GM10248 (cell line): ENCODE measurements at regions of chr11 and their contacts with region 1.

Region 1: DNA sequence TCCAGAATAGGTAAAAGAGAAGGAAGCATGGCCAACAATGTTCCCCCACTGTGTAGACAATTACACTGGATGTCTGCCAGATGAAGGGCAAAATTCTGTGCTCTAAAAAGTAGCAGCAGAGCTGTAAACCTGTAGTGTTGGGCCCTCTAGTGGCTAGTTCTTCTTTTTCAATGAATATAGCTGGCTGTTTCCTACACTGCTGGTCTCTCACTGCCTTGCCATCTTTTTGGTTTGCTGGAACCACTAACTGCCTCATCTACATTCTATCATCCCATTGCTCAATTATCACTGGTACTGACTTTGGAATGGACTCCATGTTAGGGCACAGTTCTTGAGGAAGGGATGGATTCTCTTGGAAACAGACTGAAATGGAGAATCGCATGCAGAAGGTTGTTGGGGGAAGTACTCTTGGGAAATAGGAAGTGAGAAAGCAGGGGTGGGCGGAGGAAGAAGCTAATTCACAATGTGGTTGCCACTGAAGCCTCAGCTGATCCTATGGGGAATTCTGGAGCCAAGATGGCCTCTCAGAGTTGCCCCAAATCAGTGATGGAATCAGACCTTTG is 17.9 kb downstream of the KCNE3 start:
- DNase-seq: peak; percentile 65
- CTCF ChIP-seq: peak; percentile 59

Region 2: DNA sequence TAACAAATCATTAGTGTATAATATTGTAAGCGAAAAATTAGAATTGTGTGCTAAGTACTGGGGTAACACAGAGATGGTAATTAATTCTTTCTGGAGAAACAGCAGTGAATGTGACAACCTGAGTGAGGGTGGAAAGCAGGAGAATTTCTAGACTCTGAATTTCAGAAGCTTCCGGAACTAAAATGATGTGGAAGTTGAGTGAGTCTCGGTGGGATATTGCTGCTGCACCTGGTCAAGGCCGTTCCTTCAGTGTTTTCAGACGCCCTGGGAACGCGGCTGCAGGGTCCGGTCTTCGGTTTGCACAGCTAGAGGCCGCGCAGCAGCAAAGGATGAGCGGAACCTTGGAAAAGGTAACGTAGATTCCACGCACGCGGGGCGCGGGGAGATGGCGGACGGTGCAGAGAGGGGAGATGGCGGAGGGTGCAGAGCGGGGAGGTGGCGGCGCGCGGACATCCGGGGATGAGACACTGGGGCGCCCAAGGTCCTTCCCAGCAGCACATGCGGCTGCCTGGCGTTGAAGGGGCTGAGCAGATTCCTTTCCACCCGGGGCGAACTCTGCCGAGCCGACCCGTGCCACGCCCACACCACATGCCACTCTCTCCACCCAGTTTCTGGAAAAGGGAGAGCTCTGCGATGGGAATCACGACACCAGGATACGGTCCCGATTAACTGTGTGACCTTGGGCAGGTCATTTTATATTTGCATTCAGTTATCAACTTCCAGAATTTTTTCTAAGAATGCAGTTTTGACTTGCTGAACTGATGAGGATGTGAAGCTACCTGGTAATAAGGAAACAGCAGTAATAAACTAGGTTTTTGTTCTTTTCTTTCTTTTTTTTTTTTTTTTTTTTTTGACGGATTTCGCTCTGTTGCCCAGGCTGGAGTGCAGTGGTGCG is 661.6 kb before region 1 on chr11 and contains the start of gene MRPL48:
- CTCF ChIA-PET with region 1: no interaction called
- POLR2A ChIA-PET with region 1: no interaction called
- DNase-seq: peak; percentile 95
- CTCF ChIP-seq: no peak

Region 3: DNA sequence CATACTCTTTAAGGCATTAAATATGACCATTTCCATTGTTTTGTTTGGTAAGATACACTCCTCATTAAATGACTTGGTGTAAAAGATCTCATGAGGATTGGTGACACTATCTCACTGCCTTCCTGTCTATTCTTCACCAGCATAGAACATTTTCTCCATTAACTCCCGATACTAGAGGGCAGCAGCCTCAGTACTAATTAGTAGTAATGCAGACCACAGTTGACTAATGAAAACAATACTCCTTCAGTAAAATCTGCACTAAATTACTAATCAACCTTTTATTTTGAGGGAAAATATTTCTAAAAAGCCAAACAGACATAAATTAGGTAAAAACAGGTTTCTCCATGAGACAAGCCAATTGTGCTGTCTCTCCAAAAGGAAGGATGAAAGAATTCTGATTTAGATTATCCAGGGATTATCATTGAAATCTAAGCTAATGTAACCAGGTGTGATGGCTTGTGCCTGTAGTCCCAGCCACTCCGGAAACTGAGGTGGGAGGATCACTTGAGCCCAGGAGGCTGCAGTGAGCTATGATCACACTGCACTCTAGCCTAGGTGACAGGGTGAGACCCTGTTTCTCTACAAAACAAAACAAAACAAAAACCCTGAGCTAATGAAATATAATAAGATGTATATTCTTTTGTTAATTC is 60.6 kb before region 1 on chr11:
- CTCF ChIA-PET with region 1: interaction called, 136 read pairs
- POLR2A ChIA-PET with region 1: no interaction called
- DNase-seq: peak; percentile 50
- CTCF ChIP-seq: peak; percentile 80

Region 4: DNA sequence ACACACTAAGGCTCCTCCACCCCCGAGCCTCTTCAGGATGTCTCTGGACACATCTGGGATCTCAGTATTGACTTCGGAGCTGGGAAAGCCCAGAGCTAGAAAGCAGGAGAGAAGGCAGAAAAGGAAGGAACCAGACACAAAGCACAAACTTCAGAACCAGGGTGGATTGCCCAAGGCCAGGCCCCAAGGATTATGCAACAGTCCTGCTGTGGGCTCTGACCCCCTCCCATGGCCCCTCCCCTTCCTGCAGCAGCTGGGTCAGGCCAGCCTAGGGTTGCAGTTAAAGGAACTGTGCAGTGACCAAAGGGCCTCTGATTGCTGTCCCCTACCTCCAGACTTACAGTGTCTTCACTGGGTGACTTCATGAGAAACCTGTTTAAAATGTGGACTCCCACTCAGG is 12.6 kb after region 1 on chr11:
- CTCF ChIA-PET with region 1: interaction called, 72 read pairs
- POLR2A ChIA-PET with region 1: no interaction called
- DNase-seq: no peak
- CTCF ChIP-seq: no peak

Region 5: DNA sequence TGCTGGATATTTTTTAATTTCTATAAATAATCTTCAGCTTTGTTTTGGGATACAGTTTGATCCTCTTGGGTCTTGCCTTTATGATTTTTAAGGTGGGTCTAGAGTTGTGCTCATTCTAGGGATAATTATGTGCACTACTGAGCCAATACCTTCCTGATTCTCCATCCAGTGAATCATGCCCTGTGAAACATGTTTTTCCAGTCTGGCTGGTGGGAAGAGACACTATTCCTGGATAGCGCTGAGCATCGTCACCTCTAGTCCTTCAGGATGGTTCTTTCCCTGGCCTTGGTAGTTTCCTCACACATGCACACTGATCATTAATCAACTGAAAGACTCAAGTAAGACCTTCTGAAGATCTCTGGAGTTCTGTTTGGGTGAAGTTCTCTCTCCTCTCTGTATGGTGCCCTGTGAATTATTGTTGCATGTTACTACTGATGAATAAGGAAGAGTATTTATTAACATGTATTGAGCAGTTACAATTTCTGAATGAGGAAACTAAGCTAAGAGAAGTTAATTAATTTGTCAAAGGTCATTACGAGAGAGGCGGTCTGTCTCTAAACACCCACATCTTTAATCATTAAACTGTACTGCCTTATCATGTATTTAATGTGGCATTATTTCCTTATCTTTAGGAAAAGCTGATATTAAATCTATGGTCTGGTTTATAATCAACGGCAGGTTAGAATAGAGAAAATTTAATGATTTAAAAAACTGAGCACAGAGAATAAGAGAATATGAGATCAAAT is 83.2 kb after region 1 on chr11:
- CTCF ChIA-PET with region 1: no interaction called
- POLR2A ChIA-PET with region 1: no interaction called
- DNase-seq: no peak
- CTCF ChIP-seq: no peak

Region 6: GRCh38 chr11:74570266-74571061 is 121.0 kb after region 1 on chr11:
- CTCF ChIA-PET with region 1: interaction called, 192 read pairs
- POLR2A ChIA-PET with region 1: no interaction called
- DNase-seq: peak; percentile 57
- CTCF ChIP-seq: peak; percentile 67

Region 7: GRCh38 chr11:74696488-74696887 is 247.0 kb after region 1 on chr11:
- CTCF ChIA-PET with region 1: no interaction called
- POLR2A ChIA-PET with region 1: no interaction called
- DNase-seq: no peak
- CTCF ChIP-seq: no peak

Region 8: GRCh38 chr11:74739546-74740270 is 290.3 kb after region 1 on chr11:
- CTCF ChIA-PET with region 1: interaction called, 12 read pairs
- POLR2A ChIA-PET with region 1: no interaction called
- DNase-seq: peak; percentile 76
- CTCF ChIP-seq: peak; percentile 91